K562 (cell line): ENCODE measurements at regions of chr14 and their contacts with region 1.

Region 1: DNA sequence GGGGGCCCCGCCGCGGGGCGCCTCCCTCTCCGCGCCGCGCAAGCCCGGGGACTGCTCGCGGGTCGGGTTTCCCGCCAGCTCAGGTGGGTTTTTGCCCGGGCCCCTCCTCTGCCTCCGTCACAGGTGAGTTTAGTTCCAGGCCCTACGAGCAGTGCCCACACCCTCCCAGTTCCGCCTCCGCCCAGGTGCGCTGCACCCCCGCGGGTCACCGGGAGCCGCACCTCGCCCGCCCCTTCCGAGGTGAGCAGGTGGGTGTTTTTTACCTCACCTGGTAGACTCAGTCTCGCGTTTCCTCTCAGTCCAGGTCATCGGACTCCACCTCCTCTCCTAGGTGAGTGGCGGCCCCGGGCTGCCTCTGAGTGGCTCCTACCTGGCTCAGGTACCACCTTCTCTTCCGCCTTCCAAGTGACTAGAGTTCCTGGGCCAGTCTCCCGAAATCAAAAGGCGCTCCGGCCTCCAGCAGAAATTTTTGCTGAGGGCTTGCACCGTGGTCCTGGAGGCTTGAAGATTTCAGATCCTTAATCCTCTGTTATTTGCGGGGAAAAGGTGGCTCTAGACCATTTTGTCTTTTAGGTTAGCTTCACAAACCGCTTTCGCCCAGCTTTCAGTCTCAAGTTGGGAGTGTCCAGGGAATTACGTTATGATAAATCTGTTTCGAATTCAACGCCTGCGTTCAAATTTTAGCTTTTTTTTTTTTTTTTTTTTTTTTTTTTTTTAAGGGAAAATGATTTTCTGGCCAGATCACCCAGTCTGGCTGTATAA is at the start of gene TMEM30B:
- DNase-seq: no peak
- ATAC-seq: no peak
- H3K4me3 ChIP-seq: no peak within 1 kb of the TSS
- H3K27ac ChIP-seq: no peak within 1 kb of the TSS
- H3K4me1 ChIP-seq: no peaks in the 10 kb centered on the region
- H3K27me3 ChIP-seq: no peaks in the 10 kb centered on the region
- CTCF ChIP-seq: no peak
- EP300 ChIP-seq: no peak
- POLR2A ChIP-seq: no peak
- RAD21 ChIP-seq: no peak
- polyA plus RNA-seq, gene TMEM30B: not detected

Region 2: DNA sequence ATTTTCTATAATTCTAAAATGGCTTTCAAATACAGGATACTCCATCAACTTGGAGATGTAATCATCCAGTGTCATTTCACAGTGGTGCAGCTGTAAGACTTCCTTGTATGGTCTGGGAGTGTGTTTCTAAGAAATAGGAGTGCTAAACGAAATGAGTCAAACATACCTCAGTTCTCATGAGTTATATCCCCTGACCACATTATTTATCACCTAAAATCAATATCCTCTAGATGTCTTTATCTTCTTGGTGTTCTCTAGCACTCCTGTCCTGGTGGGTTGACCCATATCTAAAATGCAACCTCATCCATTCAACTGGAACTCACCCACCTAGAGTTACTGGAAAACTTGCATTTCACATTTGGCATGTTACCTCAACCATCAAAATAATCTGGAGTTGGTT is 33.4 kb before region 1 on chr14:
- CTCF ChIA-PET with region 1: no interaction called
- POLR2A ChIA-PET with region 1: no interaction called
- in situ Hi-C with region 1: no loop called
- intact Hi-C with region 1: no loop called
- DNase-seq: no peak
- ATAC-seq: no peak
- H3K4me3 ChIP-seq: no peak overlapping the region
- H3K27ac ChIP-seq: no peak overlapping the region
- H3K4me1 ChIP-seq: no peaks in the 10 kb centered on the region
- H3K27me3 ChIP-seq: peaks cover 0 to 5% of the 10 kb centered on the region in 2 experiments; a peak in 3 of 5 replicates
- CTCF ChIP-seq: no peak
- EP300 ChIP-seq: no peak
- POLR2A ChIP-seq: no peak
- RAD21 ChIP-seq: no peak

Region 3: DNA sequence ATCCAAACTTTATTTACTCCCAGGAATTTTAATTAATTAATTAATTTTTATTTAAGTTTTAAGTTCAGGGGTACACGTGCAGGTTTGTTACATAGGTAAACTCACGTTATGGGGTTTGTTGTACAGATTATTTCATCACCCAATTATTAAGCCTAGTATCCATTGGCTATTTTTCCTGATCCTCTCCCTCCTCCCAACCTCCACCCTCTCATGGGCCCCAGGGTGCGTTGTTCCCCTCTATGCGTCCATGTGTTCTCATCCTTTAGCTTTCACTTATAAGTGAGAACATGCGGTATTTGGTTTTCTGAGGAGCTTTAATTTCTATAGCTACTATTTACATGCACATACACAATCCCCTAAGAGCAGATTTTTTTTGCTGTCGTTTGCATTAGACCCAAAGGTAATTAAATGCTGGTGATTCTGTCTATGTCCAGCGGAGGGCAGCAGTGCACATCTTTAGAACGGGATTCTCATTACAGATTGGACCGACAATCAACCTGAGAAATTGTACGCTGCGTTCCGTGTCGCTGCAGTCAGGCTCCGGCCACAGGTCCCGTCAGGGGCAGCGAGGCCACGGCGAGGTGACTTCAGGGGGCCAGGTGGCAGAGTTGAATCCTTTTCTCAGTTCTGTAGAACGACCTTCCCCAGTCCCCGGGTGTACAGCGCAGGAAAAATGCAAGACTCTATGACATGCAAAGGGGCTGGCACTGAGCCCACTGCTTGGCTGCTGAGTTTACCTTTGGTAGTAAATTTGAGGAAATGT is 11.9 kb before region 1 on chr14:
- CTCF ChIA-PET with region 1: no interaction called
- POLR2A ChIA-PET with region 1: no interaction called
- in situ Hi-C with region 1: no loop called
- intact Hi-C with region 1: loop called (anchors 1 kb)
- DNase-seq: peak; percentile 23 to 71 (median 36)
- ATAC-seq: peak; percentile 90
- H3K4me3 ChIP-seq: no peak overlapping the region
- H3K27ac ChIP-seq: no peak overlapping the region
- H3K4me1 ChIP-seq: no peaks in the 10 kb centered on the region
- H3K27me3 ChIP-seq: peaks cover 0 to 7% of the 10 kb centered on the region in 2 experiments; a peak in 2 of 5 replicates
- CTCF ChIP-seq: peak; percentile 59 to 71 (median 65); a peak in 5 of 6 replicates
- EP300 ChIP-seq: no peak
- POLR2A ChIP-seq: no peak
- RAD21 ChIP-seq: peak; percentile 50 to 68; a peak in 3 of 4 replicates